SK-N-SH (cell line): ENCODE measurements at regions of chr7 and their contacts with region 1.

Region 1: DNA sequence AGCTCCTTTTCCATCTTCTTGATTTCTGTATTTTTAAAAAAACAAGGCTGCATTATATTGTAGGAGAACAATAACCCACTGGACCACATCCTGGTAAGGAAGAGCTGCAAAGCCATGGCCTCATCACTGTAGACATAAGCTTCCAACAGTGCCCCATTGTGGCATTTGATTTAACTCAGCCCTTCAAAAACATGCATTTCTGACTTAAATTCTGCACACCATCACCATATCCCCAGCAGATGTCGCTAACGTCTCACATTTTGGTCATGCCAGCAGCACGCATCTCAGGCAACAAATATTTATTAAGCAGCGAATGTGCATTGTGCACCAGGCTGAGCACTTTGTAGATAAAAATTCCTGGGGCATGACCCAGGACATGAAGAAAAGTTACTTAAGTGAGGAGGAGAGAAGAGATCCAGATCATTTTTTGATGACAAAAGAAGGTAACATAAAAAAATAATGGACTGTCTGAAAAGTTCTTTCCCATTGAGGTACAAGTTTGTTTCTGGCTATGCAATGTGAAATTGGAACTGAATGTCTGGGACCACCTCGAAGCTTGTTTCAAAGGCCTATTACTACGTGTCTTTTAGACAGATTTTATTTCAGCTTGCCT is 164.6 kb upstream of the CDCA7L start:
- DNase-seq: peak; percentile 74
- H3K4me3 ChIP-seq: no peak overlapping the region; a peak in 1 of 4 replicates
- H3K27ac ChIP-seq: no peak overlapping the region
- H3K4me1 ChIP-seq: peaks cover 0 to 7% of the 10 kb centered on the region in 2 experiments; a peak in 1 of 4 replicates
- H3K27me3 ChIP-seq: no peaks in the 10 kb centered on the region
- CTCF ChIP-seq: peak; percentile 99
- EP300 ChIP-seq: no peak
- RAD21 ChIP-seq: peak; percentile 100

Region 2: GRCh38 chr7:22094413-22095342 is 15.7 kb before region 1 on chr7:
- CTCF ChIA-PET with region 1: interaction called, 90 read pairs
- POLR2A ChIA-PET with region 1: no interaction called
- DNase-seq: no peak
- H3K4me3 ChIP-seq: no peak overlapping the region
- H3K27ac ChIP-seq: no peak overlapping the region
- H3K4me1 ChIP-seq: no peaks in the 10 kb centered on the region
- H3K27me3 ChIP-seq: peaks cover 9% of the 10 kb centered on the region; the same call in 1 of the 2 replicates
- CTCF ChIP-seq: peak; percentile 28; the same call in 1 of the 2 replicates
- EP300 ChIP-seq: no peak
- RAD21 ChIP-seq: no peak

Region 3: DNA sequence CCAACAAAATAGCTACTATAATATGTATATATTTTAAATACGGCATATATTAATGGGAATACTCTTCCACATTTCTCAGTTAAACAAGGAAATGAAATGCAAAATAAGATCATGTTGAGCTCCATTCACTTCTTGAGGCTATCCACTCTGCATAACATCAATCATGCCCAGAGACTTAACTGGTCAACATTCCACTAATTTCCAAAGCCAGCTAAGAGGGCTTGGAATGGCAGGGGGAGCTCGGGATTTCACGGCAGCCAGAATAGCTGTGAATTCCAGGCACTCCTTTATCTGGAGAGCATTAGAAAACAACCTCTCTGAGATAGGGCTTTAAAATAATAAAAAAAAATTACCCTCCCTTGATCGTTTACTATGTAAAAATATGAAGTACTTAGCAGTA is 30.2 kb after region 1 on chr7:
- CTCF ChIA-PET with region 1: interaction called, 20 read pairs
- POLR2A ChIA-PET with region 1: no interaction called
- DNase-seq: no peak
- H3K4me3 ChIP-seq: no peak overlapping the region
- H3K27ac ChIP-seq: peak overlapping the region in 1 of 2 experiments; percentile 62; a peak in 1 of 4 replicates
- H3K4me1 ChIP-seq: peaks cover 0 to 18% of the 10 kb centered on the region in 2 experiments; a peak in 2 of 4 replicates
- H3K27me3 ChIP-seq: no peaks in the 10 kb centered on the region
- CTCF ChIP-seq: no peak
- EP300 ChIP-seq: no peak
- RAD21 ChIP-seq: no peak

Region 4: GRCh38 chr7:22255834-22256233 is 145.5 kb after region 1 on chr7:
- CTCF ChIA-PET with region 1: interaction called, 22 read pairs
- POLR2A ChIA-PET with region 1: no interaction called
- DNase-seq: no peak
- H3K4me3 ChIP-seq: no peak overlapping the region
- H3K27ac ChIP-seq: no peak overlapping the region
- H3K4me1 ChIP-seq: peaks cover 0 to 13% of the 10 kb centered on the region in 2 experiments; a peak in 2 of 4 replicates
- H3K27me3 ChIP-seq: no peaks in the 10 kb centered on the region
- CTCF ChIP-seq: no peak
- EP300 ChIP-seq: no peak
- RAD21 ChIP-seq: no peak

Region 5: GRCh38 chr7:22350466-22351328 is 240.4 kb after region 1 on chr7:
- CTCF ChIA-PET with region 1: interaction called, 27 read pairs
- POLR2A ChIA-PET with region 1: no interaction called
- DNase-seq: peak; percentile 76
- H3K4me3 ChIP-seq: no peak overlapping the region
- H3K27ac ChIP-seq: peak overlapping the region; percentile 89 to 96
- H3K4me1 ChIP-seq: peaks cover 32 to 33% of the 10 kb centered on the region in 2 experiments
- H3K27me3 ChIP-seq: no peaks in the 10 kb centered on the region
- CTCF ChIP-seq: no peak
- EP300 ChIP-seq: peak; percentile 91 to 97
- RAD21 ChIP-seq: peak; percentile 31

Region 6: GRCh38 chr7:22452142-22452959 is 342.0 kb after region 1 on chr7:
- CTCF ChIA-PET with region 1: interaction called, 24 read pairs
- POLR2A ChIA-PET with region 1: no interaction called
- DNase-seq: peak; percentile 74
- H3K4me3 ChIP-seq: peak overlapping the region in 1 of 2 experiments; percentile 33; a peak in 1 of 4 replicates
- H3K27ac ChIP-seq: no peak overlapping the region
- H3K4me1 ChIP-seq: no peaks in the 10 kb centered on the region
- H3K27me3 ChIP-seq: no peaks in the 10 kb centered on the region
- CTCF ChIP-seq: peak; percentile 65
- EP300 ChIP-seq: no peak
- RAD21 ChIP-seq: peak; percentile 55

Region 7: GRCh38 chr7:22488643-22489462 is 378.5 kb after region 1 on chr7:
- CTCF ChIA-PET with region 1: interaction called, 203 read pairs
- POLR2A ChIA-PET with region 1: no interaction called
- DNase-seq: peak; percentile 79
- H3K4me3 ChIP-seq: no peak overlapping the region
- H3K27ac ChIP-seq: no peak overlapping the region
- H3K4me1 ChIP-seq: peaks cover 0 to 15% of the 10 kb centered on the region in 2 experiments; a peak in 2 of 4 replicates
- H3K27me3 ChIP-seq: no peaks in the 10 kb centered on the region
- CTCF ChIP-seq: peak; percentile 99
- EP300 ChIP-seq: no peak
- RAD21 ChIP-seq: peak; percentile 100

Region 8: DNA sequence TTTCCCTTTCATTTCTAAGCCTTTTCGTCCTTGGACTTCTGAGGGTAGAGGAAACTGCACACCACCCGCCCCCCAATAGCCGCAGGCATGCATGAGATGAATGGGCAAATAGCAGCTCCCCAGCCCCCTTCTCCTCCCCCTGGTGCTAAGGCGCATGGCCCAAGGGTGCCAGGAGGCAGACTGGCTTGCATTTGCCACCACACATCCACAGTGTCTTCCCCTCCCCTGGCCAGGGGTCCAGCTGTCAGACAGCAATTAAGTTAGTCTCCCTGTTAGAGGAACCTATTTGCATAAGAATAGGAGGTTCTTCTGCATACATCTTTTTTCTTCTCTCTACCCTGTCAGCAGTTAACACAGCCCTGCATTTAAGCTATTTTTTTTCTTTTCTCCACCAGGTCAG is 692.1 kb after region 1 on chr7:
- CTCF ChIA-PET with region 1: no interaction called
- POLR2A ChIA-PET with region 1: no interaction called
- DNase-seq: no peak
- H3K4me3 ChIP-seq: no peak overlapping the region
- H3K27ac ChIP-seq: no peak overlapping the region
- H3K4me1 ChIP-seq: no peaks in the 10 kb centered on the region
- H3K27me3 ChIP-seq: peaks cover 4% of the 10 kb centered on the region; the same call in 1 of the 2 replicates
- CTCF ChIP-seq: no peak
- EP300 ChIP-seq: no peak
- RAD21 ChIP-seq: no peak